CD4-positive, alpha-beta memory T cell (primary cell): ENCODE measurements at regions of chr17 and their contacts with region 1.

Region 1: GRCh38 chr17:42536048-42536371 is at the start of gene NAGLU:
- DNase-seq: peak; percentile 67 to 76 (median 70)
- H3K4me3 ChIP-seq: peak within 1 kb of the TSS; percentile 43 to 57
- H3K4me3 Mint-ChIP-seq: peak within 1 kb of the TSS; percentile 82 to 93 (median 84)
- H3K27ac ChIP-seq: peak within 1 kb of the TSS; percentile 46
- H3K27ac Mint-ChIP-seq: peak within 1 kb of the TSS; percentile 55 to 84 (median 82)
- H3K4me1 ChIP-seq: peaks cover 33% of the 10 kb centered on the region
- H3K4me1 Mint-ChIP-seq: peaks cover 23 to 55% (median 37%) of the 10 kb centered on the region in 4 donors
- H3K27me3 ChIP-seq: no peaks in the 10 kb centered on the region
- H3K27me3 Mint-ChIP-seq: no peaks in the 10 kb centered on the region
- total RNA-seq, gene NAGLU: 20.6 to 22.8 TPM

Region 2: DNA sequence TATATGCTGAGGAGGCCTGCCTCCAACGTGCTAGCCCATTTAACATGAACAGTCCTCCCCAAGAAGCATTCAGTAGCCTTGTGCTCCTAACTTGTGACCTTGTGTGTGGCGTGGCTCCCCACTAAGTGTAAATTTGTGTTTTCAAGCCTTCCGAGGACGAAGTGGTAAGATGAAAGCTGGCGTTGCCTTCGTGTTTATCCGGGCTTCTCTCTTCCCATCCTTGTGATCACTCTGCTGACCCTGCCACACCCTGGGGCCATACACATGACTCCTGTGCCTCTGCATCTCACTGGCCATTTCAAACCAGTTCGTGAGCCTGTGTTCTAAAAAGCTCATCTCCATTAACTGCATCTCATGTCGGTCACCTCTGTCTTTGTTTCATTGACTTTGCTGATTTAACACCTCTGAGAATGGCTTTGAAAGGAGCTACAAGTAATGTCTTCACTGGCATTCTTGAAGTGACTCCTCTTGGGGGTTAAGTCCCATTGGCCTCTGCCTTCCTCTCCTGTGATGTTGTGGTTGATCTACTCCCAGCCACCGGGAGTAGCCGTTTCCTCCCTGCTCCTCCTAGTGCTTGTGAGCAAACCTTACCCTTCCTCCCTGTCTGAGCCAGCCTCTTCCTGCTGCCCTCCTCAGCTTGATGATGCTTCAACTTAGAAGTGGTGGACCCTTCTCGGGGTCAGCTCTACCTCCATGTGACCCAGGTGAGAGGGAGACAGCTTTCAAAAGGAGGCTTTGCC is 27.4 kb before region 1 on chr17:
- CTCF ChIA-PET with region 1: no interaction called
- POLR2A ChIA-PET with region 1: no interaction called
- intact Hi-C with region 1: no loop called
- DNase-seq: no peak
- H3K4me3 ChIP-seq: no peak overlapping the region
- H3K4me3 Mint-ChIP-seq: no peak overlapping the region
- H3K27ac ChIP-seq: no peak overlapping the region
- H3K27ac Mint-ChIP-seq: peak overlapping the region in 1 of 7 donors; percentile 32
- H3K4me1 ChIP-seq: no peaks in the 10 kb centered on the region
- H3K4me1 Mint-ChIP-seq: peaks cover 0 to 4% (median 0%) of the 10 kb centered on the region in 4 donors
- H3K27me3 ChIP-seq: no peaks in the 10 kb centered on the region
- H3K27me3 Mint-ChIP-seq: no peaks in the 10 kb centered on the region

Region 3: GRCh38 chr17:42548070-42548837 is 12.2 kb after region 1 on chr17:
- CTCF ChIA-PET with region 1: interaction called, 5 read pairs
- POLR2A ChIA-PET with region 1: interaction called, 28 read pairs
- intact Hi-C with region 1: no loop called
- DNase-seq: peak; percentile 62 to 79 (median 69)
- H3K4me3 ChIP-seq: peak overlapping the region in 1 of 2 donors; percentile 45
- H3K4me3 Mint-ChIP-seq: peak overlapping the region in 5 of 8 donors; percentile 36 to 59 (median 56)
- H3K27ac ChIP-seq: no peak overlapping the region
- H3K27ac Mint-ChIP-seq: no peak overlapping the region
- H3K4me1 ChIP-seq: peaks cover 7% of the 10 kb centered on the region
- H3K4me1 Mint-ChIP-seq: peaks cover 6 to 22% (median 10%) of the 10 kb centered on the region in 4 donors
- H3K27me3 ChIP-seq: no peaks in the 10 kb centered on the region
- H3K27me3 Mint-ChIP-seq: no peaks in the 10 kb centered on the region

Region 4: GRCh38 chr17:42554250-42555121 is 18.5 kb after region 1 on chr17:
- CTCF ChIA-PET with region 1: no interaction called
- POLR2A ChIA-PET with region 1: interaction called, 28 read pairs
- intact Hi-C with region 1: loop called (anchors 2 kb)
- DNase-seq: peak; percentile 68 to 80 (median 74)
- H3K4me3 ChIP-seq: peak overlapping the region; percentile 49 to 69
- H3K4me3 Mint-ChIP-seq: peak overlapping the region; percentile 86 to 92 (median 91)
- H3K27ac ChIP-seq: peak overlapping the region; percentile 77
- H3K27ac Mint-ChIP-seq: peak overlapping the region; percentile 79 to 94 (median 93)
- H3K4me1 ChIP-seq: peaks cover 17% of the 10 kb centered on the region
- H3K4me1 Mint-ChIP-seq: peaks cover 10 to 43% (median 19%) of the 10 kb centered on the region in 4 donors
- H3K27me3 ChIP-seq: no peaks in the 10 kb centered on the region
- H3K27me3 Mint-ChIP-seq: no peaks in the 10 kb centered on the region

Region 5: DNA sequence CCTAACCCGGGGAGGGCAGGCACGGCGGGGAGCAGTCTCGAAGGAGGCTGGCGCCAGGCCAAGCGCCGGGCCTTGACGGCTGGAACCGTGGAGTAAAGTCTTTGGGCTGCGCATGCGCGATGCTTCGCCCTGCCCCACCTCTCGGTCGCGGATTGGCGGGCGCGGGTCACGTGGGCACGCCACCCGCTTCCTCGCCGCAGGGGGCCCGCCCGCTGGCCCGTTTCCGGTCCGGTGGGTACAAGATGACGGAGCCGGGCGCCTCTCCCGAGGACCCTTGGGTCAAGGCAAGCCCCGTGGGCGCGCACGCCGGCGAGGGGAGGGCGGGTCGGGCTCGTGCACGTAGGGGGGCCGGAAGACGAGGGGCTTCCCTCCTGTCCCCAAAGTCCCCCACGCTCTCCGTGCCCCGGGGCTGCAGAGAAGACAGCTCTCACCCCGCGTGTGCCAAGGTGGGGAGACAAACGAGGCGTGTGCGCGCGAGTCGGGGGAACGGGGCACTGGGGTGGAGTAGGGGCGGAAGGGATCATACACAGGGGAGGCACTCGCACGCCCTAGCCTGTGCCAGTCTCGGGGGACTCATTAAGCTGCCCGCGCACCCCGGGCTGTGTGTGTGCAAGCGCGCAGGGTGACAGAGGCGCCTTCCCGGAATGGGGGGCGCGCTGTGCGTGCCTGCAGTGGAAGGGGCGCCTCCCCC is 31.0 kb after region 1 on chr17 and contains the start of gene MLX:
- CTCF ChIA-PET with region 1: interaction called, 3 read pairs
- POLR2A ChIA-PET with region 1: interaction called, 10 read pairs
- intact Hi-C with region 1: no loop called
- DNase-seq: peak; percentile 90 to 91 (median 90)
- H3K4me3 ChIP-seq: peak within 1 kb of the TSS; percentile 89 to 97
- H3K4me3 Mint-ChIP-seq: peak within 1 kb of the TSS; percentile 94 to 98 (median 96)
- H3K27ac ChIP-seq: peak within 1 kb of the TSS; percentile 79
- H3K27ac Mint-ChIP-seq: peak within 1 kb of the TSS; percentile 95 to 98 (median 96)
- H3K4me1 ChIP-seq: peaks cover 56% of the 10 kb centered on the region
- H3K4me1 Mint-ChIP-seq: peaks cover 13 to 65% (median 42%) of the 10 kb centered on the region in 4 donors
- H3K27me3 ChIP-seq: no peaks in the 10 kb centered on the region
- H3K27me3 Mint-ChIP-seq: no peaks in the 10 kb centered on the region
- total RNA-seq, gene MLX: 73.3 to 73.7 TPM

Region 6: DNA sequence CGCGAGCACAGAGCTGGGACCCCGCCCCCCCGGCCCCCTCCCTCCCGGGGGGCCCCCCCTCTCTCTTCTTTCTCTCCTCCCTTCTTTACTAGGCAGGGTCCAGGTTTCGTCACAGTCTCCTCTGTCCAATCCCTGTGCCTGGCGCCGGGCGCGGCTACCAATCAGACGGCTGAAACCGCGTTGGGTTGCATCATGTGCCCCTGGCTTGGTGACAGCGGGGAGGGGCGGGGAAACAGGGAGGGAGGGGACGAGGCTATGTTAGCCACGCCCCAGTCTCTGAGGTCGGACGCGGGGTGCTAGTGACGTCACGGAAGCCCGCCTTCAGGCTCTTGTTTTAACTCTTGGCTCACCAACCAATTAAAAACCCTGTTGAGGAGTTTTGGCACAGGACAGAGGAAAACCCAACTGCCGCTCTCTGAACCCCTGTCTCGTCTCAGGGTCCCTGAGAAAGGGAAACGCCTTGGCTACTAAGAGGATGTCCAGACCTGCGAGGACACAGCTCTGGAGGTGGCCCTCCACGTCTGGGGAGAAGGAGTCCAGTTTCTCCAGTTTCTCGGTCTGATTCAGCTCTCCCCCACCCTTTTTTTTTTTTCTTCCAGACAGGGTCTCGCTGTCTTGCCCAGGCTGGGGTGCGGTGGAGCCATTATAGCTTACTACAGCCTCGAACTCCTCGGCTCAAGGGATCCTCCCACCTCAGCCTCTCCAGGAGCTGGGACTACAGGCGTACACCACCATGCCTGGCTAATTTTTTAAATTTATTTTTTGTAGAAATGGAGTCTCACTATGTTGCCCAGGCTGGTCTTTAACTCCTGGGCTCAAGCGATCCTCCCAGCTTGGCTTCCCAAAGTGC is 141.2 kb after region 1 on chr17:
- CTCF ChIA-PET with region 1: interaction called, 5 read pairs
- POLR2A ChIA-PET with region 1: no interaction called
- intact Hi-C with region 1: loop called (anchors 5 kb)
- DNase-seq: peak; percentile 91 to 98 (median 93)
- H3K4me3 ChIP-seq: peak overlapping the region; percentile 63 to 75
- H3K4me3 Mint-ChIP-seq: peak overlapping the region; percentile 86 to 97 (median 90)
- H3K27ac ChIP-seq: peak overlapping the region; percentile 42
- H3K27ac Mint-ChIP-seq: peak overlapping the region; percentile 79 to 94 (median 89)
- H3K4me1 ChIP-seq: peaks cover 74% of the 10 kb centered on the region
- H3K4me1 Mint-ChIP-seq: peaks cover 32 to 70% (median 46%) of the 10 kb centered on the region in 4 donors
- H3K27me3 ChIP-seq: peaks cover 36% of the 10 kb centered on the region
- H3K27me3 Mint-ChIP-seq: peaks cover 23 to 27% of the 10 kb centered on the region in 2 donors